ENCODE measurements at regions of chr10 and their contacts with region 1.

Region 1: DNA sequence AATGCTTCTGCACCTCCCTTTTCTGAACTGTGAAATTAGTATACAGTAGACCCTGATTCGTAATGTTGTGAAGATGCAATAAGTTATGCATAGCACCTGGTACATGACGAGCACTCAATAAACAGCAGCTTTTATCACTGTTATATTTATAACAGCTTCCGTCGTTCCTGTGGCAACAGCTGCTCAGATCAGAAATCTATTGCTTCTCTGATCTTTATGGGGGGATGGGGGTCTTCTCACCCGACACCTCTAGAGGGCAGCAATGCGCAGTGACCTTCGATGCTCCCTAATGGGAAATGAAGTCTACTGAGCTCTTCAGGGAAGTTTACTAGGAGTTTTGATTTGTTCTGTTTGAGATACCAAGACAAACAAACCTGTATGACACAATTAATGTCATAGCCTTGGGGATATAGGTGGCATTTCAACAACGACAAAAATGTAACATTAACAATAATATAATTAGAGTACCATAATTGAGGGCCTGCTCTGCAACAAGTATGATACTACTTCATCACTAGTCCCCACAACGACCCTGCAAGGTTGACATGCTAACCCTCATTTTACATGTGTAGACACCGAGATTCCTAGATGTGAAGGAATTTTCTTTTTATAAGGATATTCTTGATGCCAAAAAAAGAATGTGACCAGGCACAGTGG is 289.6 kb downstream of the SFMBT2 start:
- DNase-seq: peak; percentile 62 to 71
- ATAC-seq: peak; percentile 33 to 88; a peak in 4 of 6 replicates
- H3K4me3 ChIP-seq: no peak overlapping the region
- H3K27ac ChIP-seq: no peak overlapping the region
- H3K4me1 ChIP-seq: no peaks in the 10 kb centered on the region
- CTCF ChIP-seq: peak; percentile 74
- EP300 ChIP-seq: no peak
- POLR2A ChIP-seq: no peak
- RAD21 ChIP-seq: peak; percentile 71 to 78; a peak in 4 of 5 replicates

Region 2: DNA sequence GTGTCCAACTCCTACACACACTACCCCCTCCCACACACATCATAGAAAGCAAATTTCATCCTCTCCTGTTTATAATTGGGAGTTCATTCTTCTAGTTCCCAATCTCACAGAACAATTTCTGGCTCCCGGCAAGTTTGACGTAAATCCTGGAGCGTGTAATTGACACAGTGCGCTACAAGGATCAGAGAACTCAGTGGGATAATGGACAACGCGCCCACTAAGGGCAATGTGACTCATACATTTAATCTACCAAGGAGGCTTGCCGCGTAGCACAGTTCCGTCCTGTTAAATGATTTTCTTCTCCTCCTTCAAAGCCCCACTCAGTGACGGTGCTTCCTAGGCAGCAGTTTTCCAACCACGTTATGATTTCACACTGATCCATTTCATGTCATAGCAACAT is 12.0 kb after region 1 on chr10:
- CTCF ChIA-PET with region 1: interaction called, 20 read pairs
- POLR2A ChIA-PET with region 1: no interaction called
- DNase-seq: no peak
- ATAC-seq: no peak
- H3K4me3 ChIP-seq: no peak overlapping the region
- H3K27ac ChIP-seq: no peak overlapping the region
- H3K4me1 ChIP-seq: no peaks in the 10 kb centered on the region
- CTCF ChIP-seq: no peak
- EP300 ChIP-seq: no peak
- POLR2A ChIP-seq: no peak
- RAD21 ChIP-seq: no peak